Vagina (tissue), 2 donors: ENCODE measurements at regions of chr18 and their contacts with region 1.

Region 1: GRCh38 chr18:21980744-21981143 is 188.6 kb upstream of the GATA6 start:
- DNase-seq: no peak
- H3K4me3 ChIP-seq: no peak overlapping the region
- H3K27ac ChIP-seq: no peak overlapping the region
- H3K4me1 ChIP-seq: no peaks in the 10 kb centered on the region
- H3K27me3 ChIP-seq: no peaks in the 10 kb centered on the region
- CTCF ChIP-seq: no peak
- POLR2A ChIP-seq: no peak

Region 2: DNA sequence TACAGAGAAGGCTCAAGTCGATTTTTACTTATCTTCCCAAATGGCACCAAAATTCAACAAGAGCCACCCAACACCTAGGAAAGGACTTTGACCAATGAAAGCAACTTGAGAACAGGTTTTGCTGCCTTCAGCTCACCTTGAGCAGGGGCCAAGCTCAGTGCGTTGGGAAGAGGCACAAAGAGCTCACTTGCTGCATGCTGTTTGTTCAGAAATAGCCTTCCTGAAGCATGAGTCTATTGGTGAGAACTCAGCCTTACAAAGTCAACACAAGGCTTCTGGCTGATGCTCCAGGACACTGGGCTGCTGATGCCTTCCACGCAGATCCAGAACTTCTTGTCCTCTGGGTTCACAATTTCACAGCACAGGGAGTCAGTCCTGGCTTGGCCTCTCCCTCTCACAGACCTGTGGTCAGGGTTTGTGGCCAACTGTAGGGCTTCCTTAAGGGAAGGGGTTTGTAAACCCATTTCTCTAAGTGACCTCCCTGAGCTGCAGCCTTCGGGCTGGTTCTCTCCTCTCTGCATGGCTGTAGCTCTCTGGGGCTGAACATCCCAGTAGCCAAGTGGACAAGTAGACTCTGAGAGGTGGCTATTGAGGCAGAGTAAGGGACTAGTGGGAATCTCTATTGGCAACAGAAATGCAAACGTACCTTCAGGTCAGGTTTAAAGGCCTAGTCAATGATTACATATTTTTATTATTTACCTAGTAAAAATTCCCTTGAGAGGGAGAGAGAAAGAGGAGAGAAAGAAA is 63.9 kb after region 1 on chr18:
- intact Hi-C with region 1: loop called (anchors 2 kb)
- DNase-seq: no peak
- H3K4me3 ChIP-seq: no peak overlapping the region
- H3K27ac ChIP-seq: no peak overlapping the region
- H3K4me1 ChIP-seq: no peaks in the 10 kb centered on the region
- H3K27me3 ChIP-seq: no peaks in the 10 kb centered on the region
- CTCF ChIP-seq: no peak
- POLR2A ChIP-seq: no peak

Region 3: GRCh38 chr18:22585821-22586220 is 605.1 kb after region 1 on chr18:
- intact Hi-C with region 1: loop called (anchors 10 kb)
- DNase-seq: no peak
- H3K4me3 ChIP-seq: no peak overlapping the region
- H3K27ac ChIP-seq: no peak overlapping the region
- H3K4me1 ChIP-seq: no peaks in the 10 kb centered on the region
- H3K27me3 ChIP-seq: no peaks in the 10 kb centered on the region
- CTCF ChIP-seq: no peak
- POLR2A ChIP-seq: no peak